SK-N-SH (cell line): ENCODE measurements at regions of chr1 and their contacts with region 1.

Region 1: DNA sequence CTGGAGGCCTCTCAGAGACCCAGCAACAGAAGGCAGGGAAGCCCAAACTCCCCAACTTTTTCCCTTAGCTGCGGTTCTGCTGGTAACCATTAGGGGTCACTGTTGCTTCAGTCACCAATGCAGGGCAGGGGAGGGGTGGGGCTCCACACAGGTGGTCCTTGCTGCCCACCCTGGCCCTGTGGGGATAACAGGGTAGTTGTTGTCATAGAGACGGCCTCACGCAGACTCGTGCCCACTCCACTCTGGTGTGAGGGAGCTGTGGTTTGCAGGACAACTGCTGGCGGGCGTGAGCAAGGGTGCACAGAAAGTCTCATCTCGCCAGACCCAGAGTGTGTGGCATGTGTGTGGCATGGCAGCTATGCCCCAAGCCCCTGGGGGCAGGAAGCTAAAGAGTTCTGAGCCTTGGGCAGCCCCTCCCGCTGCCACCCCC is 19.9 kb downstream of the INSRR start:
- DNase-seq: peak; percentile 81
- H3K4me3 ChIP-seq: no peak overlapping the region; a peak in 1 of 4 replicates
- H3K27ac ChIP-seq: peak overlapping the region in 1 of 2 experiments; percentile 43; a peak in 2 of 4 replicates
- H3K4me1 ChIP-seq: peaks cover 0 to 54% of the 10 kb centered on the region in 2 experiments; a peak in 2 of 4 replicates
- H3K27me3 ChIP-seq: peaks cover 9% of the 10 kb centered on the region; the same call in 1 of the 2 replicates
- CTCF ChIP-seq: peak; percentile 94
- EP300 ChIP-seq: no peak; a peak in 1 of 4 replicates
- RAD21 ChIP-seq: peak; percentile 84

Region 2: DNA sequence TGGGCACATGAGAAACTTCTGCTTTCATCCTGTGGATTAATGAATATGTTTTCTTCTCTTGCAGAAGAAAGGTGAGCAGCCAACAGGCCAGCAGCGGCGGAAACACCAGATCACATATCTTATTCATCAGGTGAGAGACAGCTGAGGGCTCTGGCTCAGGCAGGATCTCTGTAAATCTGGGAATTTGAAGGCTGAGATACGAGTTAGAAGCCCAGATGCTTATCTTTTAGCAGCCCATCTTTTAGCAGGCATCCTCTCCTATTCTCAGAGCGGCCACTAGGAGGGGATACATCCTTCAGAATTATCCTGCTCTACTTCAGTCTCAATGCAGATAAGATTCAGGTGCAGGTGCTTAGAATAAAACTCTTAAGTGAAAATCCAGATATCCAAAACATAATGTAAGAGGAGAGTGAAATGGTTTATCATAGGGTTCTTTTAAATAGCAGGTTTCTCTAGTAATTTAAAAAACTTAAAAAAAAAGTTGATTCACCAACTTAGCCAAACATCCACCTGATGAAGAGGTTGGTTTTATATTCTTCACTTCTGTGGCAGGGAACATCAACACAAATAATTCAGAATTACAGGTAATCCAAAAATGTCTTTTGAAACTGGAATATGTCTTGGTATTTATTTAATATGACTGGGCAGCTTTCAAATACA is 41.7 kb before region 1 on chr1:
- CTCF ChIA-PET with region 1: interaction called, 186 read pairs
- POLR2A ChIA-PET with region 1: interaction called, 8 read pairs
- DNase-seq: peak; percentile 68
- H3K4me3 ChIP-seq: no peak overlapping the region; a peak in 1 of 4 replicates
- H3K27ac ChIP-seq: peak overlapping the region in 1 of 2 experiments; percentile 85; a peak in 2 of 4 replicates
- H3K4me1 ChIP-seq: peaks cover 20 to 59% of the 10 kb centered on the region in 2 experiments
- H3K27me3 ChIP-seq: no peaks in the 10 kb centered on the region
- CTCF ChIP-seq: peak; percentile 94
- EP300 ChIP-seq: peak in 1 of 2 experiments; percentile 83; a peak in 2 of 4 replicates
- RAD21 ChIP-seq: peak; percentile 90

Region 3: DNA sequence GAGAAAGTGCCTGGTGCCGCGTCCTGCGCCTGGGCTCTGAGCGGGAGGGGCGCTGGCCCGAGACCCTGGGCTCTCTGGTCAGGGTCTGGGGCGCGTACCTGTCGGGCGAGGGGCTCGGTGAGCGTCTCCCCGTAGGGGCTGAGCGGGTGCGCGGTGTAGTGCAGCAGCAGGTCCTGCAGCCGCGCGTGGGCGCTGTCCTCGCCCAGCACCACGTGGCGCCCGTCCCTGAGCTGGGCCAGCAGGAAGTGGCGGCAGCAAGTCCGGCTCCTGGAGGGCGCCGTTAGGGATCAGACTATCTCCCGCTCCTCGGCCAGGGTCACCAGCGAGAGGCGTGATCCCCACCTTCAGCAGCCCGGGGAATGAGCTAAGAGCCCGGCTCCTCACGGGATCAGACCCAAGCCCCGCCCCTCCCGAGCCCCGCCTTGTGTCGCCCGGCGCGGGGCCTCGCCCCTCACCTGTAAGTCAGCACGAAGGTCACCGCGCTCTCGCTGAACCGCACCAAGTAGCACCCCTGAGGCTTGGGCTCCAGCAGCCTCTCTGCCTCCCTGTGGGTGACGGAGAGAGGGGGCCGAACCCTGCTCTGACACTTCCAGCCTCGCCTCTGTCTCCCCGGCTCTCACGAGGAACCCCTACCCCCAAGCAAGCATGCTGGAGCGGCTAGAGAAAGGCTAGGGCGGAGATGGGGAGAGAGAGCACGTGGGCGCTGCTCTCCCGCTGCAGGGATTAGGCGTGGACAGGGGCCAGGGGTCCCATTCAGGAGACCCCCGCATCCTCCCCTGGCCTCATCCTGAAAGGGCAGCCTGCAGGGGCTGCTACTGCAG is 25.0 kb before region 1 on chr1:
- CTCF ChIA-PET with region 1: interaction called, 30 read pairs
- POLR2A ChIA-PET with region 1: interaction called, 4 read pairs
- DNase-seq: no peak
- H3K4me3 ChIP-seq: no peak overlapping the region
- H3K27ac ChIP-seq: no peak overlapping the region
- H3K4me1 ChIP-seq: peaks cover 15 to 26% of the 10 kb centered on the region in 2 experiments
- H3K27me3 ChIP-seq: no peaks in the 10 kb centered on the region
- CTCF ChIP-seq: no peak
- EP300 ChIP-seq: no peak
- RAD21 ChIP-seq: no peak

Region 4: GRCh38 chr1:156828400-156829124 is 10.4 kb before region 1 on chr1:
- CTCF ChIA-PET with region 1: interaction called, 27 read pairs
- POLR2A ChIA-PET with region 1: interaction called, 3 read pairs
- DNase-seq: no peak
- H3K4me3 ChIP-seq: no peak overlapping the region
- H3K27ac ChIP-seq: no peak overlapping the region
- H3K4me1 ChIP-seq: peaks cover 0 to 24% of the 10 kb centered on the region in 2 experiments; a peak in 1 of 4 replicates
- H3K27me3 ChIP-seq: no peaks in the 10 kb centered on the region
- CTCF ChIP-seq: no peak
- EP300 ChIP-seq: no peak
- RAD21 ChIP-seq: no peak

Region 5: GRCh38 chr1:156876281-156876680 is 37.3 kb after region 1 on chr1:
- CTCF ChIA-PET with region 1: interaction called, 191 read pairs
- POLR2A ChIA-PET with region 1: no interaction called
- DNase-seq: no peak
- H3K4me3 ChIP-seq: no peak overlapping the region
- H3K27ac ChIP-seq: no peak overlapping the region
- H3K4me1 ChIP-seq: peaks cover 0 to 3% of the 10 kb centered on the region in 2 experiments; a peak in 1 of 4 replicates
- H3K27me3 ChIP-seq: no peaks in the 10 kb centered on the region
- CTCF ChIP-seq: no peak
- EP300 ChIP-seq: no peak
- RAD21 ChIP-seq: no peak

Region 6: DNA sequence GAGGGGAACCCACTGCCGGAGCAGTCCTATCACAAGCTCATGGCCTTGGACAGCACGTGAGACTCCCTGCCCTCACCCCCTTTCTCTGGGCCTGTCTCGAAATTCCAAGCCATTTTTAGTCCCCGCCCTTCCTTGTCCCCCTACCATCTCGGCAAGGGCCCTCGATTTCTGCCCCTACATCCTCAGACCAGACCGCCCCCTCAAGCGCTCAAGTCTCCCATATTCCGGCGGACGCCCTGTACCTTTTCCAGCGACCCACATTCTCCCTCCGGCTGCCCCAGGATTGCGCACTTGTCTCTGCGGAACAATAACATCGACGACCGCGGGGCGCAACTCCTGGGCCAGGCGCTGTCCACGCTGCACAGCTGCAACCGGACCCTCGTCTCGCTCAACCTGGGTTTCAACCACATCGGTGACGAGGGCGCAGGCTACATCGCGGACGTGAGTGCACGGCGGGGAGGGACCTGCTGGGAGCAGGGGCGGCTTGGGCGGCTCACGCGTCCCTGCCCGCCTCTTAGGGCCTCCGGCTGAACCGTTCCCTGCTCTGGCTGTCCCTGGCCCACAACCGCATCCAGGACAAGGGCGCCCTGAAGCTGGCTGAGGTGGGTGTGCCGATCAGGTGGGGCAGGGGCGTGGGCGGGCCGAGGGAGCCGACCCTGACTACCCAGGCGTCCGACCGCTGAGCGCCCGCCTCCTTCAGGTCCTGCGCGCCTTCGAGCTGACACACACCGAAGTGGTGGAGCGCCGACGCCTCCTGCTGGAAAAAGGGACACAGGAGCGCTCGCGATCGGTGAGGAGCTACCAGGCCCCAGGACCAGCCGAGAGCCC is 88.4 kb after region 1 on chr1:
- CTCF ChIA-PET with region 1: interaction called, 65 read pairs
- POLR2A ChIA-PET with region 1: no interaction called
- DNase-seq: peak; percentile 91
- H3K4me3 ChIP-seq: peak overlapping the region; percentile 37 to 44; a peak in 3 of 4 replicates
- H3K27ac ChIP-seq: peak overlapping the region in 1 of 2 experiments; percentile 6; a peak in 1 of 4 replicates
- H3K4me1 ChIP-seq: peaks cover 5 to 25% of the 10 kb centered on the region in 2 experiments; a peak in 2 of 4 replicates
- H3K27me3 ChIP-seq: no peaks in the 10 kb centered on the region
- CTCF ChIP-seq: peak; percentile 84
- EP300 ChIP-seq: no peak
- RAD21 ChIP-seq: peak; percentile 94

Region 7: DNA sequence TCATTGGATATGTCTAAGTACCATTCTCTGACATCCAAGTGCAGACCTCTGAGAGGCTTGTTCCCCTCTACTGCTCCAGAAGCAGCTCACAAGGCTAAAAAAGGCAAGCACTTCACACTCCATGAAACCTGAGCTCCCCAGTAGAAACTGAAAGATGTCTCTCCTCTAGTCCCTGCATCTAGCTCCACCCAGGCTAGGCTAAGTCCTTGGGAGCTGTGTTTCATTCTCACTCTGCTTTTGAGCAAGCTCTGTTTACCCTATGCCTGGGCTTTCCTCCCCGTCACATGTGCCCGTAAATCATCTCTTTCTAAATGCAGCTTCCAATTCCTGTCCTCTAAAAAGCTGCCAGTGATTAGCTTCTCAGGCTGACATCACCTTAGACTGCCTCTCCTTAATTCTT is 120.4 kb after region 1 on chr1:
- CTCF ChIA-PET with region 1: no interaction called
- POLR2A ChIA-PET with region 1: no interaction called
- DNase-seq: no peak
- H3K4me3 ChIP-seq: no peak overlapping the region
- H3K27ac ChIP-seq: no peak overlapping the region
- H3K4me1 ChIP-seq: peaks cover 0 to 7% of the 10 kb centered on the region in 2 experiments; a peak in 2 of 4 replicates
- H3K27me3 ChIP-seq: no peaks in the 10 kb centered on the region
- CTCF ChIP-seq: no peak
- EP300 ChIP-seq: no peak
- RAD21 ChIP-seq: no peak

Region 8: DNA sequence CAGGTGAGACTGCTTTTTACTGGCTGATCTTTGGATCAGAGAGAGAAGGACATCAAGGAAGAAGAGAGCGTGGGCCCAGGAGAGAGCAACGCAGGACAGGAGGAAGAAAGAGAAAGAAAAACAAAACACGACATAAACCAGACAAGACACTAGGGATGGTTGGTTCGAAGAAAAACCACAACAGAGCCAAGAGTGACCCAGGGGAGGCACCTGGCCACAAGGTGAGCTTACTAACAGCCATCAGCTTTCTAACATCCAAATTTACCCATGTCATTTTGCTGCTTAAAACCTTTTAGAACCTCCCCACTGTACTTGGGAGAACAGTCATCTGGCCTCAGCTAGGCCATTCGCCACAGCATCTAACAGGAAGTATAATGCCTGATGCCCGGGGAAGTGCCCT is 148.7 kb after region 1 on chr1:
- CTCF ChIA-PET with region 1: no interaction called
- POLR2A ChIA-PET with region 1: no interaction called
- DNase-seq: no peak
- H3K4me3 ChIP-seq: no peak overlapping the region
- H3K27ac ChIP-seq: no peak overlapping the region
- H3K4me1 ChIP-seq: no peaks in the 10 kb centered on the region
- H3K27me3 ChIP-seq: no peaks in the 10 kb centered on the region
- CTCF ChIP-seq: no peak
- EP300 ChIP-seq: no peak
- RAD21 ChIP-seq: no peak

Region 9: GRCh38 chr1:157050836-157051235 is 211.8 kb after region 1 on chr1:
- CTCF ChIA-PET with region 1: no interaction called
- POLR2A ChIA-PET with region 1: no interaction called
- DNase-seq: no peak
- H3K4me3 ChIP-seq: no peak overlapping the region
- H3K27ac ChIP-seq: no peak overlapping the region
- H3K4me1 ChIP-seq: no peaks in the 10 kb centered on the region; a peak in 1 of 4 replicates
- H3K27me3 ChIP-seq: peaks cover 5% of the 10 kb centered on the region; the same call in 1 of the 2 replicates
- CTCF ChIP-seq: no peak
- EP300 ChIP-seq: no peak
- RAD21 ChIP-seq: no peak

Region 10: GRCh38 chr1:157325220-157325619 is 486.2 kb after region 1 on chr1:
- CTCF ChIA-PET with region 1: no interaction called
- POLR2A ChIA-PET with region 1: no interaction called
- DNase-seq: no peak
- H3K4me3 ChIP-seq: no peak overlapping the region
- H3K27ac ChIP-seq: no peak overlapping the region
- H3K4me1 ChIP-seq: no peaks in the 10 kb centered on the region
- H3K27me3 ChIP-seq: no peaks in the 10 kb centered on the region; the same call in 1 of the 2 replicates
- CTCF ChIP-seq: no peak
- EP300 ChIP-seq: no peak
- RAD21 ChIP-seq: no peak